Transverse colon (tissue), 4 donors: ENCODE measurements at regions of chr1 and their contacts with region 1.

Region 1: DNA sequence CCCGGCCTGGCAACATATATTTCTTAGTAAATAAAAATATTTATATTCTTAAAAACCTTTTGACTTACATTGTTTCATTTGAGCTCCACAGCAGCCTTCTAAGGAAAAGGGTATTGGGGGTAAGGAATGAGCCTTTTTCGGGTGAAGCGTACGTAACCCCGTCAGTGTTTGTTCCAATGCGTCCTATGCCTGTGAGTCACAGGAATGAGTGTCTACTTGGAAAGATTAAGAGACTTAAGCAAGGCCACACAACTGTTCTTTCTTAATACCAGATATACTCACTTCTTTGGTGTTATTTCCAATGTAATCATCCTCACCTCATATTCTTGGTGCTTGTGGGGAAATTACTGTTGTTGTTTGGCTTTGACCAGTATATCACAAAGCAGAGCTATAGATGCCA is 22.7 kb downstream of the WDTC1 start:
- DNase-seq: no peak
- H3K4me3 ChIP-seq: no peak overlapping the region
- H3K27ac ChIP-seq: no peak overlapping the region
- H3K4me1 ChIP-seq: peaks cover 0 to 4% (median 0%) of the 10 kb centered on the region in 4 donors
- H3K27me3 ChIP-seq: no peaks in the 10 kb centered on the region
- CTCF ChIP-seq: no peak
- EP300 ChIP-seq: no peak
- POLR2A ChIP-seq: no peak

Region 2: DNA sequence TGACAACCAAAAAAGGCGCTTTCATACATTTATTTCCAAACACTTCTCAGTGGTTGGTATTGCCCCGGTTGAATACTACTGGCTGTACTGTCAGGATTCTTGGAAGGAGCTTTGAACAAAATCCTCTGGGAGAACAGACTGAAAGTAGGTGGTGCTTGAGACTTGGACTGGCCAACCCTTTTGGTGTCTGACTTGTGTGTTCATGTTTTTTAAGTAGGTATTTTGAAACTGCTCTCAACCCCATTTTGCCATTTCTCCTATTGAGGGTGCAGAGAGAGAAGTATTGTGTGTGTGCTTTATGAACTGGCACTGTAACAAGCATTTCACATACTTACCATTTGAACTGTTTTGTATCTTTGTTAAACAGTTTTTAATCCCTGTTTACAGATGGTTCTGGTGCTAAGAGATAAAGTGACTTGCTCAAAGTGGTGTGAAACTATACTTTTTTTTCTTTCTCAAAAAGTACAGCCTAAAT is 540.1 kb before region 1 on chr1:
- in situ Hi-C with region 1: no loop called
- intact Hi-C with region 1: no loop called
- DNase-seq: no peak
- H3K4me3 ChIP-seq: no peak overlapping the region
- H3K27ac ChIP-seq: peak overlapping the region in 1 of 4 donors; percentile 7
- H3K4me1 ChIP-seq: peaks cover 35 to 98% (median 68%) of the 10 kb centered on the region in 4 donors
- H3K27me3 ChIP-seq: no peaks in the 10 kb centered on the region
- CTCF ChIP-seq: no peak
- EP300 ChIP-seq: no peak
- POLR2A ChIP-seq: no peak

Region 3: DNA sequence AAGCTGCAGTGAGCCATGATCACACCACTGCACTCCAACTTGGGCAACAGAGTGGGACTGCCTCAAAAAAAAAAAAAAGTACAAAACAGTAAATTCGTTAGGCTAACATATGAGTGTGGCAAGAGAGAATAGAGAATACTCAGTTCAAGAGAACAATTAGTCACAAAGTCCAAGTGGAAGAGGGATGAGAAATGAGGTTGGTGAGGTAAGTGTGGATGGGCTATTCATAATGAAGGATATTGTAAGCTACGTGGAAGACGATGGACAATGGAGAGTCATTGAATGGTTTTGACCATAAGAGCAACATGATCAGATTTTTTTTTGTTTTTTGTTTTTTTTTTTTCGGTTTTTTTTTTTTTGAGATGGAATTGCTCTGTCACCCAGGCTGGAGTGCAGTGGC is 12.1 kb after region 1 on chr1:
- in situ Hi-C with region 1: no loop called
- intact Hi-C with region 1: loop called (anchors 1 kb)
- DNase-seq: no peak
- H3K4me3 ChIP-seq: no peak overlapping the region
- H3K27ac ChIP-seq: no peak overlapping the region
- H3K4me1 ChIP-seq: no peaks in the 10 kb centered on the region
- H3K27me3 ChIP-seq: no peaks in the 10 kb centered on the region
- CTCF ChIP-seq: no peak
- EP300 ChIP-seq: no peak
- POLR2A ChIP-seq: no peak